Heart left ventricle (tissue), 16 donors: ENCODE measurements at regions of chr2 and their contacts with region 1.

Region 1: GRCh38 chr2:15973481-15974401 is 33.4 kb downstream of the MYCN start:
- DNase-seq: no peak
- ATAC-seq: no peak
- H3K4me3 ChIP-seq: no peak overlapping the region
- H3K27ac ChIP-seq: no peak overlapping the region
- H3K4me1 ChIP-seq: no peaks in the 10 kb centered on the region
- H3K27me3 ChIP-seq: peaks cover 0 to 11% (median 0%) of the 10 kb centered on the region in 9 donors
- CTCF ChIP-seq: no peak
- POLR2A ChIP-seq: no peak

Region 2: GRCh38 chr2:15947431-15947830 is 26.3 kb before region 1 on chr2:
- intact Hi-C with region 1: loop called in 1 of 10 experiments (anchors 1 kb)
- DNase-seq: no peak
- ATAC-seq: no peak
- H3K4me3 ChIP-seq: no peak overlapping the region
- H3K27ac ChIP-seq: no peak overlapping the region
- H3K4me1 ChIP-seq: peaks cover 0 to 21% (median 12%) of the 10 kb centered on the region in 12 donors
- H3K27me3 ChIP-seq: peaks cover 0 to 12% (median 0%) of the 10 kb centered on the region in 9 donors
- CTCF ChIP-seq: no peak
- POLR2A ChIP-seq: no peak

Region 3: DNA sequence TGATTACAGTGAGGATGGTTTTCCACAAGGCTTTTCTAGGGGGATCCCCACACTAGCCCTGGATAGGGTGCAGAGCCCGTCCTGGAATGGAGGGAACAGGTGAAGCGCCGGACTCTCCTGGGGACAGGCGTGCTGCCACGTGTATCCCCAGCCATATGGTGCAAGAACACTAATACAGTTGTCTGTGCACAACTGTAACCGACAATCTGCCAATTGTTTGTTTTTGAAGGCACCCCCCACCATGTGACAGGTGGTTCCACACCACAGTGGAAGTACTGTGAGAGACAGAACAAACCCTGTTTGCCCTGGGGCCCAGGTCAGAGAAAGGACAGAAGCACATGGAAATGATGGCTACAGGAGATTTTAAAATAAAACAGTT is 19.5 kb after region 1 on chr2:
- intact Hi-C with region 1: no loop called
- DNase-seq: no peak
- ATAC-seq: no peak
- H3K4me3 ChIP-seq: no peak overlapping the region
- H3K27ac ChIP-seq: no peak overlapping the region
- H3K4me1 ChIP-seq: no peaks in the 10 kb centered on the region
- H3K27me3 ChIP-seq: peaks cover 0 to 12% (median 0%) of the 10 kb centered on the region in 9 donors
- CTCF ChIP-seq: no peak
- POLR2A ChIP-seq: no peak